ENCODE measurements at regions of chr14 and their contacts with region 1.

Region 1: GRCh38 chr14:37594238-37594914 is 673 bp downstream of the FOXA1 start:
- ATAC-seq: peak; percentile 7 to 72 (median 41)
- H3K4me3 ChIP-seq: peak overlapping the region; percentile 15 to 66 (median 32)
- H3K27ac ChIP-seq: no peak overlapping the region
- H3K4me1 ChIP-seq: peaks cover 0 to 6% of the 10 kb centered on the region in 2 donors

Region 2: DNA sequence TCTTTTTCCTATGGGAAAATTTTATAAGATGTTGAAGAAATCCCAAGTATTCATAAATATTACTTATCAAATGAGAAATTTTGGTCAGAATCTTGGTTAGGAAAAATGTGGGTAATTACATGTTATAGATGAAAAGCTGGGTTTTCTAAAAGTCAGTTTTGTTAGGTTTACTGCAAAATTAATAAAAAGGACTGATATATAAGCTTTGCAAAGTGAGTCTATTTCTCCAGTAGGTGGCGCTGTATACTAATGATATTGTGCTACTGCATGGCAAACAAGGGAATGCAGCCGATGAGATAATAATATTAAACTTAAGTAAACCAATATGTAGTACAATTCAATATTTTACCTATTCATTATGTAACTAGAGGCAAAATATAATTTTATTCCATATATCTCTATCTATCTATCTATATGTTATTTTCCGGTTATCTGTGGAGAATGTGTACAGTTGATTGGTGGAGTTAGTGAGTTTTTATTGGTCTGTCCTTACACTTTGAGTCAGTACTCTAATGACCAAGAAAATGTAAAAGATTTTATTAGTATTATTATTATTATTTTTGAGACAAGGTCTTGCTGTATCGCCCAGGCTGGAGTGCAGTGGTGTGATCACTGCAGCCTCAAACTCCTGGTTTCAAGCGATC is 363.7 kb before region 1 on chr14:
- in situ Hi-C with region 1: loop called in 1 of 9 experiments (anchors 25 kb)
- ATAC-seq: peak in 4 of 8 experiments; percentile 57 to 83 (median 77)
- H3K4me3 ChIP-seq: no peak overlapping the region
- H3K27ac ChIP-seq: no peak overlapping the region
- H3K4me1 ChIP-seq: no peaks in the 10 kb centered on the region

Region 3: GRCh38 chr14:37246427-37246914 is 347.9 kb before region 1 on chr14:
- in situ Hi-C with region 1: loop called in 4 of 9 experiments (anchors 10 to 25 kb)
- ATAC-seq: peak in 3 of 8 experiments; percentile 16 to 39 (median 32)
- H3K4me3 ChIP-seq: no peak overlapping the region
- H3K27ac ChIP-seq: no peak overlapping the region
- H3K4me1 ChIP-seq: no peaks in the 10 kb centered on the region

Region 4: GRCh38 chr14:37253905-37254304 is 340.5 kb before region 1 on chr14:
- in situ Hi-C with region 1: loop called in 4 of 9 experiments (anchors 10 to 25 kb)
- ATAC-seq: no peak
- H3K4me3 ChIP-seq: no peak overlapping the region
- H3K27ac ChIP-seq: no peak overlapping the region
- H3K4me1 ChIP-seq: peaks cover 0 to 5% of the 10 kb centered on the region in 2 donors

Region 5: GRCh38 chr14:37472906-37473305 is 121.5 kb before region 1 on chr14:
- in situ Hi-C with region 1: no loop called
- ATAC-seq: no peak
- H3K4me3 ChIP-seq: no peak overlapping the region
- H3K27ac ChIP-seq: no peak overlapping the region
- H3K4me1 ChIP-seq: no peaks in the 10 kb centered on the region

Region 6: GRCh38 chr14:37493606-37494005 is 100.8 kb before region 1 on chr14:
- in situ Hi-C with region 1: no loop called
- ATAC-seq: no peak
- H3K4me3 ChIP-seq: no peak overlapping the region
- H3K27ac ChIP-seq: no peak overlapping the region
- H3K4me1 ChIP-seq: no peaks in the 10 kb centered on the region

Region 7: GRCh38 chr14:37546621-37547447 is 47.5 kb before region 1 on chr14:
- in situ Hi-C with region 1: no loop called
- ATAC-seq: peak in 6 of 8 experiments; percentile 59 to 100 (median 80)
- H3K4me3 ChIP-seq: no peak overlapping the region
- H3K27ac ChIP-seq: peak overlapping the region in 1 of 2 donors; percentile 44
- H3K4me1 ChIP-seq: no peaks in the 10 kb centered on the region

Region 8: GRCh38 chr14:37810094-37810801 is 215.9 kb after region 1 on chr14:
- in situ Hi-C with region 1: no loop called
- ATAC-seq: no peak
- H3K4me3 ChIP-seq: no peak overlapping the region
- H3K27ac ChIP-seq: no peak overlapping the region
- H3K4me1 ChIP-seq: peaks cover 0 to 14% of the 10 kb centered on the region in 2 donors

Measured in motor neuron (in vitro differentiated cells).